ENCODE measurements at regions of chr17 and their contacts with region 1.

Region 1: DNA sequence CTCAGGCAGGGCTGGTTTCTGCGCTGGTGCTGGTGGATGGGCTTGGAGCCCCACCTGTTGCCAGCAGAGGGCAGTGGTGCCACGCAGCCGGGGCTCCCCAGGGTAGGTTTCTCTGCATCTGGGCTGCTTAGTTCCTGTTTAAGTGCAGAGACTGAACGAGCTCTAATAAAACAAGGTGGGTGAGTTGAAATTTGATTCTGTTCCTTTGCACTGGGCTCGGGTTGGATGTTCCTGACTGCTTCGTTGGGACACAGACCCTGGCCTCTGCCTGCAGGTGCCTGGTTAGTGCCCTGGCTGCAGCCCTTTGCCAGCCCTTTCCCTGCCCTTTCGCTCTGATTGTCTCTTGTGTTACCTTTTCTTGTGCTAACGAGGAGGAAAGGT is 30.0 kb downstream of the TBCD start:
- DNase-seq: peak; percentile 81
- ATAC-seq: peak; percentile 100
- H3K4me3 ChIP-seq: no peak overlapping the region
- H3K27ac ChIP-seq: peak overlapping the region; percentile 48
- H3K4me1 ChIP-seq: peaks cover 4% of the 10 kb centered on the region
- H3K27me3 ChIP-seq: no peaks in the 10 kb centered on the region
- CTCF ChIP-seq: peak; percentile 97

Region 2: DNA sequence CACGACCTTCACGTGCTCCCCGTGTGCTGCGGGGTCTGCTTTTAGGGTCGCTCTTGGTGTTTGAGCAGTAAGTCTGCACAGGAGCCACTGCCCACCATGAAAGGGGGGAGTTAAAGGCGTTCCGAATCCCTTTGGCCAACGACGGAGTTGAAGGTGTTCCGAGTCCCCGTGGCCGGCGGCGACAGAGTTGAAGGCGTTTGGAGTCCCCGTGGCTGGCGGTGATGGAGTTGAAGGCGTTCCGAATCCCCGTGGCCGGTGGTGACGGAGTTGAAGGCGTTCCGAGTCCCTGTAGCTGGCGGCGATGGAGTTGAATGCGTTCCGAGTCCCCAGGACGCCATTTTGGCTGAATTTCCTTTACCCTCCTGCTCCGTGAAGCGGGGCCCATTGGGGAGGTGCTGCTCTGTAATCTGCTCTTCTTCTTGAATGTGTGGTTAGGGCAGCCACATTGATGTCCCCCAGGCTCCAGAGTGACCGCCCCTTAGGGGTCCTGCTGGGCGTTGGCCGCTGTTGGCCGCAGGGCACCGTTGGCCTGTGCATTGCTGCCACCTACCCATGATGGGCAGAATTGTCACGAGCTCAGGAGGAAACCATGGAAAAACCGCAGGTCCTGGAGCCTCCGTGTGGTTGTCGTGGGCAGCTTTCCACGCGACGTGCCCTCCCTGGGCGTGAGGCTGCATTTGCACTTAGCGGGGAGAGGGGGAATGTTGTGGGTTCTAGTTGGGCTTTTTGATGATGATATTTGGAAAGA is 131.6 kb after region 1 on chr17:
- CTCF ChIA-PET with region 1: interaction called, 11 read pairs
- POLR2A ChIA-PET with region 1: no interaction called
- intact Hi-C with region 1: loop called (anchors 2 kb)
- DNase-seq: peak; percentile 40
- ATAC-seq: peak; percentile 50; the same call in 1 of the 2 replicates
- H3K4me3 ChIP-seq: no peak overlapping the region
- H3K27ac ChIP-seq: no peak overlapping the region
- H3K4me1 ChIP-seq: no peaks in the 10 kb centered on the region
- H3K27me3 ChIP-seq: no peaks in the 10 kb centered on the region
- CTCF ChIP-seq: peak; percentile 52

Measured in PC-3 (cell line).